GM12878 (cell line): ENCODE measurements at regions of chr18 and their contacts with region 1.

Region 1: DNA sequence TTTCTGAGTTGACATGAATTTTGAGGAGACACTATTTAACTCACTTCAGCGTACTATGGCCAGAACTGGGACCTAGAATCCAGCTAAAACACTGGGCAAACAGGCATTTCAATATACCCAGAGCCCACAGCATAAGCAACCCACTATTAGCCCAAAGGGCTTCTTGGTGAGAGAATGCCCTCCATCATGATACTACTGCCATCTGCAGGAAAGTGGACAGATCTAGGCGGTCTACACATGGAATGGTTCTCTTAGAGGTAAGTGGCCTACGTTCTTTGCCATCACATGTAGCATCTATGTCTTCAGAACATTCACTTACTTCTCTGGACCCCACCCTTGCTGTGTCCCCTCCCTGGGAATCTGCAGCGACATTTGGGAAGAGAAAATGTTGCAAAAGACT is 181.3 kb upstream of the LINC00305 start:
- DNase-seq: no peak
- ATAC-seq: peak; percentile 90
- H3K4me3 ChIP-seq: no peak overlapping the region
- H3K27ac ChIP-seq: no peak overlapping the region
- H3K4me1 ChIP-seq: no peaks in the 10 kb centered on the region
- H3K27me3 ChIP-seq: no peaks in the 10 kb centered on the region
- CTCF ChIP-seq: peak in 2 of 3 experiments; percentile 19 to 38; a peak in 3 of 6 replicates
- EP300 ChIP-seq: no peak
- POLR2A ChIP-seq: no peak
- RAD21 ChIP-seq: peak; percentile 60

Region 2: GRCh38 chr18:64017870-64018269 is 312.3 kb before region 1 on chr18:
- CTCF ChIA-PET with region 1: interaction called, 8 read pairs
- POLR2A ChIA-PET with region 1: no interaction called
- RAD21 ChIA-PET with region 1: interaction called, 5 read pairs
- SMC1A ChIA-PET with region 1: interaction called, 10 read pairs
- in situ Hi-C with region 1: no loop called
- intact Hi-C with region 1: no loop called
- DNase-seq: no peak
- ATAC-seq: peak; percentile 68
- H3K4me3 ChIP-seq: no peak overlapping the region
- H3K27ac ChIP-seq: no peak overlapping the region
- H3K4me1 ChIP-seq: no peaks in the 10 kb centered on the region
- H3K27me3 ChIP-seq: no peaks in the 10 kb centered on the region; a peak in 1 of 4 replicates
- CTCF ChIP-seq: peak; percentile 32 to 60 (median 45); a peak in 5 of 6 replicates
- EP300 ChIP-seq: no peak
- POLR2A ChIP-seq: no peak
- RAD21 ChIP-seq: peak; percentile 78

Region 3: GRCh38 chr18:64052772-64053171 is 277.4 kb before region 1 on chr18:
- CTCF ChIA-PET with region 1: no interaction called
- POLR2A ChIA-PET with region 1: no interaction called
- RAD21 ChIA-PET with region 1: no interaction called
- SMC1A ChIA-PET with region 1: no interaction called
- in situ Hi-C with region 1: no loop called
- intact Hi-C with region 1: no loop called
- DNase-seq: no peak
- ATAC-seq: no peak
- H3K4me3 ChIP-seq: no peak overlapping the region
- H3K27ac ChIP-seq: no peak overlapping the region
- H3K4me1 ChIP-seq: no peaks in the 10 kb centered on the region
- H3K27me3 ChIP-seq: no peaks in the 10 kb centered on the region
- CTCF ChIP-seq: no peak
- EP300 ChIP-seq: no peak
- POLR2A ChIP-seq: no peak
- RAD21 ChIP-seq: no peak

Region 4: DNA sequence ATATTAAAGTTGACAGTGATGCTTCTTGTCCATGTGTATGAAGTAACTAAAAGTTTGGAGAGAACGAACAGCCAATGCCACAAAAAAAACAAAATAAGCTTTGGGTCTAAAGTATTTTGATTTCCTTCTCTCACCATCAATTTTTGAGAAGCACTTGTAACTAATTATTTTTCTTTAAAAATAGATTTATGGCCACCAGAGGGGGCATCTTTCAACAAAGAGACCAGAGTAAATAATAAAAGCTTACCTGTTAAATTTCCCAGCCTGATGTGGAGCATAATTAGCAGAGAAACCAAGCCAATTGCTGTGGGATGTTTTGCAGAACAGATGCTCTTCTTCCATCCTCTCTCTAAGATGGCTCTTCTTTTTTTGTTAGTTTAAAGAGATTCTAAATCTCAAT is 210.2 kb before region 1 on chr18:
- CTCF ChIA-PET with region 1: interaction called, 19 read pairs
- POLR2A ChIA-PET with region 1: no interaction called
- RAD21 ChIA-PET with region 1: interaction called, 18 read pairs
- SMC1A ChIA-PET with region 1: interaction called, 4 read pairs
- in situ Hi-C with region 1: no loop called
- intact Hi-C with region 1: loop called (anchors 1 kb)
- DNase-seq: no peak
- ATAC-seq: peak; percentile 35; the same call in 2 of the 3 replicates
- H3K4me3 ChIP-seq: no peak overlapping the region
- H3K27ac ChIP-seq: no peak overlapping the region
- H3K4me1 ChIP-seq: no peaks in the 10 kb centered on the region
- H3K27me3 ChIP-seq: no peaks in the 10 kb centered on the region
- CTCF ChIP-seq: no peak; a peak in 2 of 6 replicates
- EP300 ChIP-seq: no peak
- POLR2A ChIP-seq: no peak
- RAD21 ChIP-seq: peak; percentile 21; the same call in 1 of the 2 replicates